Cardiac septum (tissue), 1 donor: ENCODE measurements at regions of chr17 and their contacts with region 1.

Region 1: DNA sequence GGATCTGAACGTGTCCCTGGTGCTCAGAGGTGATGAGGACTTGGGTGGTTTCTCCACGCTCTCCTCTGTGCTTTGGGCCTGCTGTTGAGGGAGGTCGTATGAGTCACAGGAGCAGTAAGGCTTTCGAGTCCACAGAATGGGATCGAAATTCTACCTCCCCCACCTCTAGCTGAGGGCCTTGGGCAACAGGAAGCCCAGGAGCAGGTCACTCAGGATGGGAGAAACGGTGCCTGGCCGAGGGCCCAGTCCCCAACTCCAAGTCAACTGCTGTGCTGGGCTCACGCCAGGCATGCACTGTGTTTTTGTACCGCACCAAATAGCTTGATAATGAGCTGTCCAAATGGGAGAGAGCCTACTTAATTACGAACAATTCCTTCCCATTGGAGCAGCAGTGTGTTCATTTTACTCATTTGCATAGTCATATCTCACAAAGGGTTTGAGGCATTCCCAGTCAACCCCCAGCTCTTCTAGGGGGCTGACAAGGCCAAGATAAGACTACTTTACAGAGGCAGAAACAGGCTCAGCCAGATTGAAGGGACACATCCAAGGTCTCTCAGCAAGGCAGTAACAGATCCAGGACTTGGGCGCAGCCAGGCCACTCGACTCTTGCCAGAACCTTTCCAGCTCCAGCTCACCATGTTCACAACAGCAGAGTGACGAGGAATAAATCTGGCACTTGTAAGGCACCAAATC is 53.6 kb downstream of the WNT3 start:
- DNase-seq: no peak

Region 2: GRCh38 chr17:46264456-46265198 is 500.2 kb before region 1 on chr17:
- intact Hi-C with region 1: no loop called
- DNase-seq: no peak

Region 3: GRCh38 chr17:46742565-46743270 is 22.1 kb before region 1 on chr17:
- intact Hi-C with region 1: loop called (anchors 2 kb)
- DNase-seq: no peak

Region 4: GRCh38 chr17:46754226-46754625 is 10.6 kb before region 1 on chr17:
- intact Hi-C with region 1: no loop called
- DNase-seq: no peak

Region 5: DNA sequence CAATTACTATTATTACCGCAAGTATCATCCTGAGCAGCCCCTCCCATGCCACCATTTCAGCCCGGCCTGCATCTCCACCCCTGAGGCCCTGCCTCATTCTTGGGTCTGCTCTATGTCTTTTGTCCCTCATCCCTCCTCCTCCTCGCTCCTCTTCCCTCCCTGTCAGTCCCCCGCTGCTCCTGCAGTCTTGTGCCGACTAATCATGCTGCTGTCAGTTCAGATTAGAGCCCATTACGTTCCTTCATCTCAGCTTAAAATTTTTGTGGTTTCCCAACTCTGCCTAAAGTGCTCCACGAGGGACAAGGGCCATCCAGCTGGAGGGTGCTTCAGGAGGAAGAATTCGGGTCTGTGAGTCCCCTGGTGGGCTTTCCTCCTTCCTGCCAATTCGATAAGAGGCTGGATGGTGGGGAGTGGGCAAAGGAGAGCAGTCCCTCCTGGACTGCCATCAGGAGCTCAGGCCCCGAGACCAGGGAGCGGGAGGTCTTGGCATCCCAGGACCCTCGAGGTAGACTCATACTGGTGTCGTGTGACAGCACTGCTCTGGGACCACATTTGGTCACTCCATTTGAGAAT is 125.2 kb after region 1 on chr17:
- intact Hi-C with region 1: no loop called
- DNase-seq: no peak

Region 6: DNA sequence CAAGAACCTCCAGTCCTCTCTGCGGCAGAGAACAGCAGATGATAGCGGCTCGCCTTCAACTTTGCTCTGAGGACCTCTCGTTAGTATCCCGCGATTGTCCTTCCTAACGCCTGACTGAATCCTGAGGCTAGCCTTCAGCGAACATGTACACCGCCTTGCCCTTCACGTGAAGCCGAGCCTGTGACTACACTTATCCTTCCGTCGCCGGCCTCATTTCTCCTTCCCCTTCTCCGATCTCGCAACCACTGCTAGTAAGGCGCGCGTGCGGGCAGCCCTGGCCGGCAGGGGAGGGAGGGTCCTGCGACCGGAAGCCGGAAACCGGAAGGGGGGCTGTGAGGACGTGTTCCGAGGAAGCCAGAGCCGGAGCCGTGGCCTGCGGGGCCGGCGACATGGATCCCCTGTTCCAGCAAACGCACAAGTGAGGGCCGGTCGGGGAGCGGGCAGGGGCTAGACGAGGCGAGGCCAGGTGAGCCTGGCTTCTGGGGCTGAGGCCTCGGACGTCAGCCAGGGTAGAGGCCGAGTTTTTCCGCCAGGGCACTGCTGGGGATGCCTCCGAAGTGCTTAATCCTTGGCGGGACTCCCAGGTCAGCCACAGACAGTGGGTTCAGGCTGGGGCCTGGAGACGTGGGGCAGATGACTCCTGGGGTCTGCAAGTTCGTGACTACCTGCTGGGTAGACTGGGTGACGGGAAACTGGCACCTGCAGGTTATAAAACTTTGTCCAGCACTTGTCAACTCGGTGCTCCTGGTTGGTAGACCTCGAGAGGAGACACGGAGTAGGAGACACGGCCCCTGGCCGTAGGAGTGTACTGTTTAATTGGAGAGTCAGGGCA is 158.2 kb after region 1 on chr17 and contains the start of gene GOSR2:
- intact Hi-C with region 1: no loop called
- DNase-seq: peak; percentile 96
- total RNA-seq, gene GOSR2: 45.9 TPM